HepG2 (cell line): ENCODE measurements at regions of chr10 and their contacts with region 1.

Region 1: GRCh38 chr10:29304264-29305030 is 15.6 kb downstream of the LYZL1 start:
- DNase-seq: peak; percentile 68
- ATAC-seq: peak; percentile 82
- H3K4me3 ChIP-seq: peak overlapping the region in 2 of 3 experiments; percentile 27 to 46; a peak in 3 of 6 replicates
- H3K27ac ChIP-seq: no peak overlapping the region
- H3K4me1 ChIP-seq: peaks cover 10% of the 10 kb centered on the region; the same call in 1 of the 2 replicates
- H3K27me3 ChIP-seq: no peaks in the 10 kb centered on the region
- CTCF ChIP-seq: peak; percentile 86
- EP300 ChIP-seq: no peak
- POLR2A ChIP-seq: no peak
- RAD21 ChIP-seq: peak; percentile 84

Region 2: DNA sequence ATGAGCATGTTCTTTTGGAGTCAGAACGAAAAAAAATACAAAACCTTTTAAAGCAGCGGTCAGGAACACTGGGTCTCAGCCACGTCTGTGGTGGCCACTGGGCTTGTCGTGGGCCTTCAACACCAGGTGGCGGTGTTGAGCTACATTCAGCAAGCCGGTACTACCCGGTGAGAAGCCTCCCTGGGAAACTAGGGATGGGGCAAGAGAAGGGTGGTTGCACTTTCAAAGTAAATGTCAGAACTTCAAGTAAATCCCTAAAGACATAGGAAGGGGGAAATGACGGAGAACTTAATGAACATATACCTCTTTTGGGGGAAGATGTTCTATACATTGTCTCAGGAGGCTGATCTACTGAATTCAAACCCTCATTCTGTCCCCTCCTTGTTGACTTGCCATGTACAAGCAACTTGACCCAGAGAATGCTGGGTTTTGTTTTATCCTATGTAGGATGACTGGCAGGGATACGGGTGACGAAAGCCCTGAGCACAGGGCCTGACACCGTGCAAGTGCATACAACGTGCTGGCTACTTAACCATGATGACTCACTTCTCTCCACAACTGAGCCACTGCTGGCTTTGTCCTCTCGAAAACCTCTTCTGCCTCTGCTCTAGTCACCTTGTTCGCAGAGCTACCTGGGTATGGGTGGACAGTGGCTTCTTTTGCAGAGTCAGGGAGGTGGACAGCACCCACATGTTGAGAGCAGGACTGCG is 676.1 kb before region 1 on chr10:
- CTCF ChIA-PET with region 1: interaction called, 14 read pairs
- POLR2A ChIA-PET with region 1: no interaction called
- in situ Hi-C with region 1: loop called (anchors 10 kb)
- intact Hi-C with region 1: loop called (anchors 1 kb)
- DNase-seq: peak; percentile 62
- ATAC-seq: peak; percentile 87
- H3K4me3 ChIP-seq: no peak overlapping the region
- H3K27ac ChIP-seq: no peak overlapping the region
- H3K4me1 ChIP-seq: peaks cover 16% of the 10 kb centered on the region
- H3K27me3 ChIP-seq: peaks cover 0 to 4% of the 10 kb centered on the region in 2 experiments; a peak in 1 of 5 replicates
- CTCF ChIP-seq: peak; percentile 92
- EP300 ChIP-seq: no peak
- POLR2A ChIP-seq: no peak
- RAD21 ChIP-seq: peak; percentile 84

Region 3: GRCh38 chr10:28663576-28664313 is 640.7 kb before region 1 on chr10:
- CTCF ChIA-PET with region 1: interaction called, 8 read pairs
- POLR2A ChIA-PET with region 1: no interaction called
- in situ Hi-C with region 1: no loop called
- intact Hi-C with region 1: loop called (anchors 1 kb)
- DNase-seq: peak; percentile 77
- ATAC-seq: peak; percentile 94
- H3K4me3 ChIP-seq: no peak overlapping the region
- H3K27ac ChIP-seq: no peak overlapping the region
- H3K4me1 ChIP-seq: peaks cover 18% of the 10 kb centered on the region
- H3K27me3 ChIP-seq: peaks cover 4 to 34% of the 10 kb centered on the region in 2 experiments
- CTCF ChIP-seq: peak; percentile 91
- EP300 ChIP-seq: no peak
- POLR2A ChIP-seq: no peak
- RAD21 ChIP-seq: peak; percentile 90